Activated naive CD4-positive, alpha-beta T cell treated with anti-CD3 and anti-CD28 coated beads for 36 hours (primary cell): ENCODE measurements at regions of chr7 and their contacts with region 1.

Region 1: GRCh38 chr7:50197549-50197948 is 104.5 kb upstream of the ZPBP start:
- DNase-seq: peak; percentile 83
- H3K4me3 Mint-ChIP-seq: no peak overlapping the region
- H3K27ac Mint-ChIP-seq: peak overlapping the region; percentile 52
- H3K4me1 Mint-ChIP-seq: peaks cover 37% of the 10 kb centered on the region
- H3K27me3 Mint-ChIP-seq: no peaks in the 10 kb centered on the region

Region 2: GRCh38 chr7:50142425-50143017 is 55.0 kb before region 1 on chr7:
- CTCF ChIA-PET with region 1: interaction called, 55 read pairs
- intact Hi-C with region 1: loop called (anchors 1 kb)
- DNase-seq: peak; percentile 64
- H3K4me3 Mint-ChIP-seq: peak overlapping the region; percentile 45
- H3K27ac Mint-ChIP-seq: peak overlapping the region; percentile 82
- H3K4me1 Mint-ChIP-seq: peaks cover 43% of the 10 kb centered on the region
- H3K27me3 Mint-ChIP-seq: no peaks in the 10 kb centered on the region

Region 3: GRCh38 chr7:50147951-50148808 is 49.4 kb before region 1 on chr7:
- CTCF ChIA-PET with region 1: interaction called, 55 read pairs
- intact Hi-C with region 1: loop called (anchors 1 kb)
- DNase-seq: peak; percentile 73
- H3K4me3 Mint-ChIP-seq: peak overlapping the region; percentile 34
- H3K27ac Mint-ChIP-seq: peak overlapping the region; percentile 91
- H3K4me1 Mint-ChIP-seq: peaks cover 91% of the 10 kb centered on the region
- H3K27me3 Mint-ChIP-seq: no peaks in the 10 kb centered on the region

Region 4: DNA sequence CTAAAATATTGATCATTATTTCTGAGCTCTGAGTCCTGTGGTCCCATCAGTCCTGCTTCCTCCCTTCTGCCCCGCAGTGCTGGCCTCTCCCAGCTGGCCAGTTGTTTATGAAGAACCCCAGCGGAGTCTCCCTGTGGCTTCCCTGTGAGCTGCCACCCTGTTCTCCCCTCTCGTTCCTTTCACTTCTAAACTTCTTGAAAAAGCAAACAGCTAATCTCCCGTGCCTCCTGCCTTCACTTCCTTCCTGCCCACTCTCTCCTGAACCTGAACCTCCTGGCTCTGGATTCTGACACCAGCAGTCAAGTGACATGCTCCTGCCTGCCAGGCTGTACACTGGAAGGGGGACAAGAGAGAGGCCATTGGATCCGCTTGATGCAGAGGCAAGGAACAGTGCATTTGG is 40.8 kb before region 1 on chr7:
- CTCF ChIA-PET with region 1: interaction called, 3 read pairs
- intact Hi-C with region 1: loop called (anchors 1 kb)
- DNase-seq: no peak
- H3K4me3 Mint-ChIP-seq: peak overlapping the region; percentile 50
- H3K27ac Mint-ChIP-seq: peak overlapping the region; percentile 92
- H3K4me1 Mint-ChIP-seq: peaks cover 45% of the 10 kb centered on the region
- H3K27me3 Mint-ChIP-seq: no peaks in the 10 kb centered on the region

Region 5: DNA sequence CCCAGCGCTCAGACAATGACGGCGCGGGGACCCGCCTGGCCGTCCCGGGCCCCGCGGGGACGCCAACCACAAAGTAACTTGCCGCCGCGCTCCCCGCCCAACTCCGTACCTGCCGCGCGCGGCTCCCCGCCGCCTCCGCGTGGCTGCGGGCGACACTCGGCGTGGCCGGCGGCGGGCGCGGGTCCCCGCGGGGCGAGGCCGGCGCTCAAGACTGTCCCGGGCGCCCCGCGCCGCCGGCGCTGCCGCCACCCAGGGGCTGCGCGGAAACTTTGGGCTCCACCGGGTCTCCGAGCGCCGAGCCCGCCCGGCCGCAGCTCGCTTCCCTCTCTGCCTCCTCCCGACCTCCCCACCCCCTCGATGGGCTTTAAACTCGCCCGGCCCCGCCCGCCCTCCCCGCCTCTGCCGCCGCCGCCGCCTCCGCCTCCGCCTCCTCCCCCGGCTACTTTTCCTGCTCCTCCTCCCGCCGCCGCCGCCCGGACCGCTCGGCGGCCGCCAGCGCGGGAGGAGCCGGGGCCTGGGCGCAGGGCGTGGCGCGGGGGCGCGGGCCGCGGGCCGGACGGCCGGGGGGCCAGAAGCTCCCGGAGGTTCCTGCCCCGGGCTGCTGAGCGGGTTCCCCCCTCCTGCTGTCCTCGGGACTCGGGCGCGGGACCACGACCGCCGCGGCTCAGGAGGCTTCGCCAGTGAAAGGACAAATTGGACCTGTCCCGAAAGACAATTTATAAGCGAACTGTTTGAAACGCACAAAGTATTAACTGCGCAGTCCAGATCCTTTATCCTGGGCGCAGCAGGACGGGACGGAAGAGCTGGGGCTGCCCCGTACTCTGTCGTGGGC is 595.8 kb after region 1 on chr7:
- CTCF ChIA-PET with region 1: no interaction called
- intact Hi-C with region 1: loop called (anchors 10 kb)
- DNase-seq: peak; percentile 40
- H3K4me3 Mint-ChIP-seq: peak overlapping the region; percentile 63
- H3K27ac Mint-ChIP-seq: no peak overlapping the region
- H3K4me1 Mint-ChIP-seq: peaks cover 17% of the 10 kb centered on the region
- H3K27me3 Mint-ChIP-seq: peaks cover 26% of the 10 kb centered on the region